Aorta (tissue), 5 donors: ENCODE measurements at regions of chr10 and their contacts with region 1.

Region 1: GRCh38 chr10:90977162-90977854 is 56.4 kb upstream of the ANKRD1 start:
- DNase-seq: no peak
- ATAC-seq: no peak
- H3K4me3 ChIP-seq: no peak overlapping the region
- H3K27ac ChIP-seq: no peak overlapping the region
- H3K4me1 ChIP-seq: no peaks in the 10 kb centered on the region
- H3K27me3 ChIP-seq: no peaks in the 10 kb centered on the region

Region 2: DNA sequence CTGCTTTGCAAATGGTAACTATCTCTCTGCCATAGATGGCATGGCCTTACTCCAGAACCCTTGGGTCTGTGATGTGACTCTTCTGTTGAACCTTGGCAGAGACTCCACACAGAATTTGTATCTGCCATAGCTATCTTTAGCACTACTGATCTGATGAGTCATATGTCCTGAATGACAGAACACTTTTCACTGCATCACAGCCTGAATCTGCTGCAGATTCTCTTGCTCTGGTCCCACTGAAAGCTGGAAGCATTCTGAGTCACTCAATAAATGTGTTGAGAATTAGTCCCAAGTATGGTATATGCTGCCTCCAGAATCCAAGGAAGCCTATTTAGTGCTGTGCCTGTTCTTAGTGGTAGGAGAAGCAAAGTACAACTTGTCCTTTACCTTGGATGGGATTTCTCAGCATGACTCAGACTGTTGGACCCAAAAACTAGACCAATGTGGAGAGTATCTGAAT is 16.9 kb before region 1 on chr10:
- intact Hi-C with region 1: loop called in 1 of 2 experiments (anchors 1 kb)
- DNase-seq: no peak
- ATAC-seq: peak; percentile 79
- H3K4me3 ChIP-seq: no peak overlapping the region
- H3K27ac ChIP-seq: peak overlapping the region; percentile 57 to 91
- H3K4me1 ChIP-seq: peaks cover 0 to 4% of the 10 kb centered on the region in 2 donors
- H3K27me3 ChIP-seq: no peaks in the 10 kb centered on the region

Region 3: GRCh38 chr10:91287276-91287675 is 310.0 kb after region 1 on chr10:
- intact Hi-C with region 1: no loop called
- DNase-seq: no peak
- ATAC-seq: no peak
- H3K4me3 ChIP-seq: no peak overlapping the region
- H3K27ac ChIP-seq: no peak overlapping the region
- H3K4me1 ChIP-seq: peaks cover 6 to 8% of the 10 kb centered on the region in 2 donors
- H3K27me3 ChIP-seq: no peaks in the 10 kb centered on the region